ENCODE measurements at regions of chr2 and their contacts with region 1.

Region 1: DNA sequence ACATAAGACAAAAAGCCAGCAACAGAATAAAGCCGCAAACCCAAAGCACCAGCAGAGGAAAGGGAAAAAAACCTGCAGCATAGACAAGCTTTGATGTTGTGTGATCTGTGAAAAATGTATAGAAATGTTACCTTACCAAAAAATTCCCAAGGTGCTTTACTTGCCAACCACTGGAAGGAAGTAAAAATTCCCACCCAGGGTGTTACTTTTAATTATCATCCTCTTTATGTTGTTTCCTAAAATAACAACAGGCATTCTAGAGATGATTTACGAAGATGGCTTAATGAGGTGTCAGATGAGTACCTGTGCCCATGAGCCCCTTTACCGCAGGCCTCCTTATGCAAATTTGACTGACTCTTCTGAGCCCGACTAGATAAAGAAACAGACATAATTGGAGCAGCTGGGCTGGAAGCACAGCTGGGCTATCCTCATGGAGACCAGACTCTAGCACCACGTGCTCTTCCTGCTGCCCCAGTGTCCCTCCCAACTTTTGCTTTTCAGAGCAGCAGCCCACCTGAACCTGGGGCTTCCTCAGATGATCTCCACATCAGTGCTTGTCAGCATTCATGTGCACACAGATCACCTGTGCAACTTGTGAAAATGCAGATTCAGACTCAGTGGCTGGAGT is 41.5 kb downstream of the SRSF7 start:
- DNase-seq: peak; percentile 64
- H3K4me3 Mint-ChIP-seq: peak overlapping the region; percentile 52
- H3K27ac Mint-ChIP-seq: peak overlapping the region; percentile 89
- H3K4me1 Mint-ChIP-seq: peaks cover 58% of the 10 kb centered on the region
- H3K27me3 Mint-ChIP-seq: no peaks in the 10 kb centered on the region

Region 2: GRCh38 chr2:38315707-38316333 is 393.9 kb before region 1 on chr2:
- CTCF ChIA-PET with region 1: no interaction called
- POLR2A ChIA-PET with region 1: no interaction called
- DNase-seq: peak; percentile 47
- H3K4me3 Mint-ChIP-seq: no peak overlapping the region
- H3K27ac Mint-ChIP-seq: no peak overlapping the region
- H3K4me1 Mint-ChIP-seq: peaks cover 10% of the 10 kb centered on the region
- H3K27me3 Mint-ChIP-seq: no peaks in the 10 kb centered on the region

Region 3: GRCh38 chr2:38376346-38377049 is 333.2 kb before region 1 on chr2:
- CTCF ChIA-PET with region 1: no interaction called
- POLR2A ChIA-PET with region 1: interaction called, 10 read pairs
- DNase-seq: peak; percentile 61
- H3K4me3 Mint-ChIP-seq: peak overlapping the region; percentile 84
- H3K27ac Mint-ChIP-seq: peak overlapping the region; percentile 88
- H3K4me1 Mint-ChIP-seq: peaks cover 69% of the 10 kb centered on the region
- H3K27me3 Mint-ChIP-seq: no peaks in the 10 kb centered on the region

Region 4: DNA sequence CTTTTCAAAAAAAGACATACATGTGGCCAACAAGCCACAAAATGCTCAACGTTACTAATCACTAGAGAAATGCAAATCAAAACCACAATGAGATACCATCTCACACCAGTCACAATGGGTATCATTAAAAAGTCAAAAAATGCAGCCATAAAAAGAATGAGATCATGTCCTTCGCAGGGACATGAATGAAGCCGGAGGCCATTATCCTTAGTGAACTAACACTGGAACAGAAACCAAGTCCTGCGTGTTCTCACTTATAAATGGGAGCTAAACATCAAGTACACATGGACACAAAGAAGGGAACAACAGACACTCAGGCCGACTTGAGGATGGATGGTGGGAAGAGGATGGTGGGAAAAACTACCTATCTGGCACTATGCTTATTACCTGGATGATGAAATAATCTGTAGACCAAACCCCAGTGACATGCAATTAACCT is 314.8 kb before region 1 on chr2:
- CTCF ChIA-PET with region 1: no interaction called
- POLR2A ChIA-PET with region 1: no interaction called
- DNase-seq: no peak
- H3K4me3 Mint-ChIP-seq: no peak overlapping the region
- H3K27ac Mint-ChIP-seq: no peak overlapping the region
- H3K4me1 Mint-ChIP-seq: peaks cover 13% of the 10 kb centered on the region
- H3K27me3 Mint-ChIP-seq: peaks cover 2% of the 10 kb centered on the region

Region 5: GRCh38 chr2:38835015-38835601 is 125.4 kb after region 1 on chr2:
- CTCF ChIA-PET with region 1: no interaction called
- POLR2A ChIA-PET with region 1: no interaction called
- DNase-seq: peak; percentile 32
- H3K4me3 Mint-ChIP-seq: no peak overlapping the region
- H3K27ac Mint-ChIP-seq: no peak overlapping the region
- H3K4me1 Mint-ChIP-seq: no peaks in the 10 kb centered on the region
- H3K27me3 Mint-ChIP-seq: no peaks in the 10 kb centered on the region

Measured in activated CD4-positive, alpha-beta T cell treated with anti-CD3 and anti-CD28 coated beads, Interleukin-2, amount 10 ng/mL, durations not matched to agents 7 days and 5 days (primary cell).